ENCODE measurements at regions of chr12 and their contacts with region 1.

Region 1: GRCh38 chr12:45543906-45544315 is 185.6 kb upstream of the ARID2 start:
- DNase-seq: peak; percentile 48
- ATAC-seq: peak; percentile 88
- H3K4me3 Mint-ChIP-seq: no peak overlapping the region
- H3K27ac Mint-ChIP-seq: no peak overlapping the region
- H3K4me1 Mint-ChIP-seq: no peaks in the 10 kb centered on the region
- H3K27me3 Mint-ChIP-seq: no peaks in the 10 kb centered on the region
- CTCF ChIP-seq: peak; percentile 44

Region 2: GRCh38 chr12:45148006-45148405 is 395.9 kb before region 1 on chr12:
- CTCF ChIA-PET with region 1: no interaction called
- POLR2A ChIA-PET with region 1: no interaction called
- DNase-seq: no peak
- ATAC-seq: no peak
- H3K4me3 Mint-ChIP-seq: no peak overlapping the region
- H3K27ac Mint-ChIP-seq: no peak overlapping the region
- H3K4me1 Mint-ChIP-seq: no peaks in the 10 kb centered on the region
- H3K27me3 Mint-ChIP-seq: peaks cover 44% of the 10 kb centered on the region
- CTCF ChIP-seq: no peak

Region 3: GRCh38 chr12:45170456-45171042 is 373.4 kb before region 1 on chr12:
- CTCF ChIA-PET with region 1: interaction called, 11 read pairs
- POLR2A ChIA-PET with region 1: no interaction called
- DNase-seq: peak; percentile 91
- ATAC-seq: peak; percentile 90
- H3K4me3 Mint-ChIP-seq: no peak overlapping the region
- H3K27ac Mint-ChIP-seq: no peak overlapping the region
- H3K4me1 Mint-ChIP-seq: no peaks in the 10 kb centered on the region
- H3K27me3 Mint-ChIP-seq: no peaks in the 10 kb centered on the region
- CTCF ChIP-seq: peak; percentile 89

Region 4: GRCh38 chr12:45296118-45296517 is 247.8 kb before region 1 on chr12:
- CTCF ChIA-PET with region 1: no interaction called
- POLR2A ChIA-PET with region 1: no interaction called
- DNase-seq: no peak
- ATAC-seq: no peak
- H3K4me3 Mint-ChIP-seq: no peak overlapping the region
- H3K27ac Mint-ChIP-seq: no peak overlapping the region
- H3K4me1 Mint-ChIP-seq: peaks cover 18% of the 10 kb centered on the region
- H3K27me3 Mint-ChIP-seq: no peaks in the 10 kb centered on the region
- CTCF ChIP-seq: no peak

Region 5: DNA sequence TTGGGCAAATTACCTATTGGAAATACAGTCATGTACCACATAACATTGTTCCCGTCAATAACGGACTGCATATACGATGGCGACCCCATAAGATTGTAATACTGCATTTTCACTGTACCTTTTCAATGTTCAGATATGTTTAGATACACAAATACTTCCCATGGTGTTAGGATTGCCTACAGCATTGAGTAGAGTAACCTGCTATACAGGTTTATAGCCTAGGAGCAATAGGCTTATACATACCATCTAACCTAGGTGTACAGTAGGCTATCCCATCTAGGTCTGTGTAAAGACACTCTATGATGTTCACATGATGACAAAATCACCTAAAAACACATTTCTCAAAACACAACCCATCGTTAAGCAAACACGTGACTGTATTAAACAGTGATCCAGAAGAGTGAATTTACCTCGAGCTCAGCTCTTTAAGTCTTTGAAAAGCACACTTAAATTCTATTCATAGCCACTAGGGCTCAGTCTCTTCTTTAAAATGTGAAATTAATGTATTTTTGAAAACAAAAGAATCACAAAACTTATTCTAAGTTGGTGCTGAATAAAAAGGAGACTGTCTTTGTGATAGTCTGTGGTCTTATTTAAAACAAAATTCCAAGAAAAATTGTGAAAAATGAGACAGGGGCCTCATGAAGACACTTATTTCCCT is 53.6 kb before region 1 on chr12:
- CTCF ChIA-PET with region 1: no interaction called
- POLR2A ChIA-PET with region 1: no interaction called
- DNase-seq: no peak
- ATAC-seq: no peak
- H3K4me3 Mint-ChIP-seq: no peak overlapping the region
- H3K27ac Mint-ChIP-seq: no peak overlapping the region
- H3K4me1 Mint-ChIP-seq: peaks cover 7% of the 10 kb centered on the region; the same call in 1 of the 2 replicates
- H3K27me3 Mint-ChIP-seq: no peaks in the 10 kb centered on the region
- CTCF ChIP-seq: no peak

Region 6: GRCh38 chr12:45509187-45509586 is 34.7 kb before region 1 on chr12:
- CTCF ChIA-PET with region 1: no interaction called
- POLR2A ChIA-PET with region 1: no interaction called
- DNase-seq: no peak
- ATAC-seq: no peak
- H3K4me3 Mint-ChIP-seq: no peak overlapping the region
- H3K27ac Mint-ChIP-seq: no peak overlapping the region
- H3K4me1 Mint-ChIP-seq: no peaks in the 10 kb centered on the region
- H3K27me3 Mint-ChIP-seq: peaks cover 4% of the 10 kb centered on the region; the same call in 1 of the 2 replicates
- CTCF ChIP-seq: no peak

Region 7: GRCh38 chr12:45532113-45532512 is 11.8 kb before region 1 on chr12:
- CTCF ChIA-PET with region 1: interaction called, 19 read pairs
- POLR2A ChIA-PET with region 1: no interaction called
- DNase-seq: no peak
- ATAC-seq: peak; percentile 41
- H3K4me3 Mint-ChIP-seq: no peak overlapping the region
- H3K27ac Mint-ChIP-seq: no peak overlapping the region
- H3K4me1 Mint-ChIP-seq: peaks cover 5% of the 10 kb centered on the region; the same call in 1 of the 2 replicates
- H3K27me3 Mint-ChIP-seq: no peaks in the 10 kb centered on the region; the same call in 1 of the 2 replicates
- CTCF ChIP-seq: no peak

Region 8: DNA sequence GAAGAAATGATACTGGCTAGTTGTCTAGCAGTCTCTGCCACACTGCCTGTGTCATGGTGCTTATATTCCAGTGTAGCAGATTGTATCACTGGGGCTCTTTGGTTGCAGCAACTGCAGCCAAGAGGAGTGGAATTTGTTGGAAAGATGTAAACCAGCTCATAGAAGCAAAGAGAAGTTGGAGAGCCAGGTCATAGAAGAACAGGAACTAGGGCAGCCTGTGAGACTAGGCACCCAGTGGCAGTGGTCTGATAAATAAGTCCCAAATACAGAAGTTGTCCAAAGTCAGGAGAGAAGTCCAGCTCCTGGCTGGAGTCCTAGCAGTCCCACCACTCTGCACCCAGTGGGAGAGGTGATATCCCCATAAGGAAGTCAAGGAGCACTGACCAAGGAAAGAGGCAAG is 13.1 kb after region 1 on chr12:
- CTCF ChIA-PET with region 1: interaction called, 10 read pairs
- POLR2A ChIA-PET with region 1: no interaction called
- DNase-seq: no peak
- ATAC-seq: no peak
- H3K4me3 Mint-ChIP-seq: no peak overlapping the region
- H3K27ac Mint-ChIP-seq: no peak overlapping the region
- H3K4me1 Mint-ChIP-seq: no peaks in the 10 kb centered on the region
- H3K27me3 Mint-ChIP-seq: no peaks in the 10 kb centered on the region
- CTCF ChIP-seq: no peak

Region 9: GRCh38 chr12:45627407-45628069 is 83.6 kb after region 1 on chr12:
- CTCF ChIA-PET with region 1: interaction called, 13 read pairs
- POLR2A ChIA-PET with region 1: no interaction called
- DNase-seq: no peak
- ATAC-seq: 0 out of 2 replicates have a peak, but pooled peaks have one; percentile 34
- H3K4me3 Mint-ChIP-seq: no peak overlapping the region
- H3K27ac Mint-ChIP-seq: no peak overlapping the region
- H3K4me1 Mint-ChIP-seq: peaks cover 10% of the 10 kb centered on the region
- H3K27me3 Mint-ChIP-seq: no peaks in the 10 kb centered on the region
- CTCF ChIP-seq: no peak

Region 10: GRCh38 chr12:45720069-45720468 is 176.2 kb after region 1 on chr12:
- CTCF ChIA-PET with region 1: interaction called, 37 read pairs
- POLR2A ChIA-PET with region 1: no interaction called
- DNase-seq: no peak
- ATAC-seq: no peak
- H3K4me3 Mint-ChIP-seq: no peak overlapping the region
- H3K27ac Mint-ChIP-seq: no peak overlapping the region
- H3K4me1 Mint-ChIP-seq: peaks cover 8% of the 10 kb centered on the region
- H3K27me3 Mint-ChIP-seq: no peaks in the 10 kb centered on the region
- CTCF ChIP-seq: no peak

Region 11: DNA sequence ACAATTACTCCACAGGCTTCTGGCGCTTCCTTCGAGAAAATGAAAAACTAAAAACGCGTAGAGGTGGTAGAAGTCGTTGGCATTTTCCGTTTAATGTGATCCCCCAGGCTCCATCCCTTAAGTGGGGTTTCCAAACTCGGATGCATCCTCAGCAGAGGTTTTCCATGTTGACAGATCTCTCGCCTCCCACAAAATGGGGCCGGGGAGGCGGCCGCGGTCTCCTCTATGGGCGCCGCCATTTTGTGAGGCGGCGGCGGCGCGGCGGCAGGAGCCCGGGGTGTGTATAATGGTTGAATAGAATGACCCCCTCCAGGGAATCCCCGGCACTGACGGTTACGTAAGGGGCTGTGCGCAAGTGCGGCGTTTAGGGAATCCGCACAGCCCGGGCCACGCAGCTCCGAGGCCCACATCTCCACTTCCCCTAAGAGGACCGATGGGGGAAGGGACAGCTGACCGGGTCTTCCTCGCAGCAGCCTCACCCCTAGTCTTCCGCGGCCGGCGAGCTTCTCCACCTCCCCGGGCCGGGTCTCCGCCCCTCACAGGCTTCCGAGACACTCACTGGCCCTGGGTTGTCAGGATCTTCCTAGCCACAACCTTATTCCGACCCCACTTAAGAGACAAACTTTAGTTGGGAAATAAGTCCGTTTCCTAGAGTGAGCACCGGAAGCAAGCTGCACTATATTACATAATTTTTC is 183.5 kb after region 1 on chr12:
- CTCF ChIA-PET with region 1: interaction called, 37 read pairs
- POLR2A ChIA-PET with region 1: interaction called, 7 read pairs
- DNase-seq: peak; percentile 91
- ATAC-seq: peak; percentile 71
- H3K4me3 Mint-ChIP-seq: peak overlapping the region; percentile 95
- H3K27ac Mint-ChIP-seq: peak overlapping the region; percentile 100
- H3K4me1 Mint-ChIP-seq: peaks cover 24% of the 10 kb centered on the region
- H3K27me3 Mint-ChIP-seq: no peaks in the 10 kb centered on the region
- CTCF ChIP-seq: no peak

Measured in WTC11 (cell line).